ENCODE measurements at regions of chr6 and their contacts with region 1.

Region 1: GRCh38 chr6:73854998-73855718 is 159.2 kb downstream of the CD109 start:
- DNase-seq: peak; percentile 77
- H3K4me3 Mint-ChIP-seq: no peak overlapping the region
- H3K27ac Mint-ChIP-seq: no peak overlapping the region
- H3K4me1 Mint-ChIP-seq: no peaks in the 10 kb centered on the region
- H3K27me3 Mint-ChIP-seq: no peaks in the 10 kb centered on the region

Region 2: DNA sequence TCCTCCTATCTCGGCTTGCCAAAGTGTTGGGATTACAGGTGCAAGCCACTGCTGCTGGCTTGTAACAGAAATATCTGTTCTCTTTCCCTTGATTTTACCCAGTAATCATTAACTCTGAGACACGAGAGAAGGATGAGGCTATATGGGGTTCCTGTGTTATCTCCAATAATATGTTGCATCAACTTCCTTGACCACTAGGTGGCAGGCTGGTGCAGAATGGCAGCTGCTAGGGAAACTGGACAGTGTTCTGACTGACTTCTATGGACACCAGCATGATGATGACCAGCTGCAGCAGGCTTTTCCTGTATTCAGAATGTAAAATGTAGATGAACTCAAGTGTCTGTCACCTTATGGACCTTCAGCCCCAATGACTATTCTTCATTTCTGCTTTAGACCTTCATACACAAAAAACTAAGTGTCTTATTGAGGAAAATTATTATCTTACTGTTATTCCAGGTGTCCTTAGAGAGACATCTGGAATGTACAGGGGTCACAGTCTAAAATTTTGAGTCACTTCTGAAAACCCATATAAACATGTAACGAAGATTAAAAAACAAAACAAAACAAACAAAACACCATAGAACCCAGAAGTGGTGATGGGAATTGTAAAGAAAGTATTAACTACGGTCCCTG is 179.6 kb before region 1 on chr6:
- intact Hi-C with region 1: loop called (anchors 5 kb)
- DNase-seq: peak; percentile 93
- H3K4me3 Mint-ChIP-seq: no peak overlapping the region
- H3K27ac Mint-ChIP-seq: no peak overlapping the region
- H3K4me1 Mint-ChIP-seq: no peaks in the 10 kb centered on the region
- H3K27me3 Mint-ChIP-seq: peaks cover 18% of the 10 kb centered on the region

Region 3: DNA sequence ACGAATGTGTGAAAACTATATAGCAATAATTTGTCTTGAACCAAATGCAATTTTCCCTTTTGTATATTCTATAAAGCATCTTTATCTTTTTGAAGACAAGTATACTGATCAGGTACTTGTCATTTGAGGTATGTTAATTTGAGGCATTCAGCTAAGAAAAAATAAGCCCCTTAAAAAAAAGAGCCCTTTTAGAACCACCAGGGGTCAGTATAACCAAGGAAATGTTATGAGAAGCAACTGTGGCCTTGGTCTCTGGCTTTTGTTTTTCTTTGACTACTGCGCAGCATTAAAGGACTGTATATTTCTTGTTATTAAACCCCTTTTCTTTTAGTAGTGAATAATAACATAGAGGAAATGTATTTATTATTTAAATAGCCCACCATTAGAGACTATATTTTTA is 116.1 kb before region 1 on chr6:
- intact Hi-C with region 1: loop called (anchors 1 kb)
- DNase-seq: peak; percentile 73
- H3K4me3 Mint-ChIP-seq: no peak overlapping the region
- H3K27ac Mint-ChIP-seq: no peak overlapping the region
- H3K4me1 Mint-ChIP-seq: peaks cover 5% of the 10 kb centered on the region
- H3K27me3 Mint-ChIP-seq: no peaks in the 10 kb centered on the region

Region 4: DNA sequence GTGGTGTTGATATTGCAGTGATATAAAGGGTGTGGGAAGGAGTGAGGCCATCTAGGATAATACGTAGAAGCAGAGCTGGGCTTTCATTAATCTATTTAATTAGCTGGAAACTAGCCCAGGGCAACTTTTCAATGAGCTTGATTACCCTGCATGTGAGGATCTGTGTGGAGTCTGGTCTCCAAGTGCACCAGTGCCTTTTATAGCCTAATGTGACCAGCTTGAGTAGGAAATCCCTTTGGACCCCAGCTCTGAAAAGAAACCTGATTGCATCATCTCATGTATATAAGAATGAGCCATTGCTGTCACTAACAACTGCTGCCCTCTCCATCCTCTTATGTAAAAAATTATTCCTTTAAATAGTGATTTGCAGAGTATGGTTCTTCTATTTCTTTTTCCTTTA is 86.6 kb before region 1 on chr6:
- intact Hi-C with region 1: no loop called
- DNase-seq: no peak
- H3K4me3 Mint-ChIP-seq: no peak overlapping the region
- H3K27ac Mint-ChIP-seq: no peak overlapping the region
- H3K4me1 Mint-ChIP-seq: peaks cover 6% of the 10 kb centered on the region
- H3K27me3 Mint-ChIP-seq: no peaks in the 10 kb centered on the region

Region 5: DNA sequence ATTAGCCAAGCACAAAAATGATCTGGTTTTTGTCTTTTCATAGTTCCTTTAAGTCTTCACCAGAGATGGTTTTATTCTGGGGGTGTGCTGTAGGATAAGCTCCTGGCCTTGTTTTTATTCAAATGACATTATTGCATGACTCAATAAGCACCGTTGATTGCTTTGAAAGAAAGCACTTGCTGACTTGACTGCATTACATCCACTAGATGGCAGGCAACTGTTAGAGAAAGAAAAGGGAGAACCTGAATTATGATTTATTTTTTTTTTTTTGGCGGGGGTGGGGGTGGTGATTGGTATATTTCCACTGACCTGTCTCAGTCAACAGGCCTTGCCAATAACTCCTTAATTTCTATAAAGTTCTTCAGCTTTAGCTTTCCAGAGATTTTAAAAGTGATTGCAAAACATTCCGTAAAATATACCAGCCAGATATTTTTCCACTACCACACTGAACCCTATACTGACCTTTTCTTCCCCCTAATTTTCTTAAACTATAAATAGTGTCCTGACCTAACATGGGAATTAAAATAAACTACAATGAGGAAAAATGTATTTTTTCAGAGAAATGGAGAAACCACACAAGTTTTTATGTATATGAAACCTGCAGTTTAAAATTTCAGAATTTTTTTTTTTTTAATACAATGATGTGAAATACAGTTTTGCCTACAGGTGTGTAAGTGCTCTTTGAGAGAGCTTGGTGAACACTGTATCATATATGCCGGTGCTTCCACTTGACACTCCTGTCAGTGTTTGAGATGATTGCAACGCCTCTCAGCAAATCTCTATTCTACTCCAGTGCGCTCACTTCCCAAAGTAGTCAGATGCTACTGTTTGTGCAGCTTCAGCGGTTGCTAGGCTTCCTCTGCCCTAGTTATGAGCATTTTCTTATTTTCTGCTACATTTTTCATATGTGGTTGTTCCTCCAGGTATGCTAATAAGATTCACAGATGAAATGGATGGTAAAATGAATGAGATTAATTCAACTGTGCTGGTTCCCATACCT is 115.1 kb after region 1 on chr6:
- intact Hi-C with region 1: no loop called
- DNase-seq: no peak
- H3K4me3 Mint-ChIP-seq: no peak overlapping the region
- H3K27ac Mint-ChIP-seq: no peak overlapping the region
- H3K4me1 Mint-ChIP-seq: no peaks in the 10 kb centered on the region
- H3K27me3 Mint-ChIP-seq: no peaks in the 10 kb centered on the region

Measured in activated CD4-positive, alpha-beta T cell treated with anti-CD3 and anti-CD28 coated beads, Interleukin-2, amount 10 ng/mL, durations not matched to agents 24 days and 14 days (primary cell).